Adrenal gland (tissue), 19 donors: ENCODE measurements at regions of chr12 and their contacts with region 1.

Region 1: DNA sequence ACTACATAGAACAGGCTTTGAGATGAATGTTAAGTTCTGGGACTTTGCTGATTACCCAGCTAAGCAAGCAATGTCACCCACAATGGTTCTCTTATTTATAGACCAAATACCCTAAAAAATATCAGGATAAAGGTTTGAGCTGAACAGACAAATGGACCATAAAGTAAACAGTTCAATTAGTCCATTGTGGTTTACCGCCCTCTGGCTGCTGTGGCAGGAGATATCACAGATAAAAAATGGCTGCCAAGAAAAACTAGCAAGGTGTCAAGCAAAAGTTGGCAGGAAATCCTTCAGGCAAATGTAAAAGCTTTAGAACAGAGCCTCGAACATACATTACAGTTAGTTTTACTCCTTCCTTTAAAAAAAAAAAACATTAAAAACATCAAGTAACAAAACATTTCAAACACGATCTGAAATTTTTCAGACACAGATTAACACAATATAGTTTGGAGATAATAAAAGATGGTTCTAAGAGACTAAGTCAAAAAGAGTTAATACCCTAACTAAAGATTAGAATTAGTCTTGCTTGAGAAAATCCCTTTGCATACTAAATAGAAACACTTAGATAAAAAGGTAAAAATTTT is 41.3 kb downstream of the MED13L start:
- DNase-seq: peak; percentile 34 to 76 (median 50)
- H3K4me3 ChIP-seq: no peak overlapping the region
- H3K27ac ChIP-seq: no peak overlapping the region
- H3K4me1 ChIP-seq: peaks cover 0 to 41% of the 10 kb centered on the region in 2 donors
- H3K27me3 ChIP-seq: no peaks in the 10 kb centered on the region
- CTCF ChIP-seq: peak; percentile 56 to 82 (median 76)
- POLR2A ChIP-seq: no peak

Region 2: DNA sequence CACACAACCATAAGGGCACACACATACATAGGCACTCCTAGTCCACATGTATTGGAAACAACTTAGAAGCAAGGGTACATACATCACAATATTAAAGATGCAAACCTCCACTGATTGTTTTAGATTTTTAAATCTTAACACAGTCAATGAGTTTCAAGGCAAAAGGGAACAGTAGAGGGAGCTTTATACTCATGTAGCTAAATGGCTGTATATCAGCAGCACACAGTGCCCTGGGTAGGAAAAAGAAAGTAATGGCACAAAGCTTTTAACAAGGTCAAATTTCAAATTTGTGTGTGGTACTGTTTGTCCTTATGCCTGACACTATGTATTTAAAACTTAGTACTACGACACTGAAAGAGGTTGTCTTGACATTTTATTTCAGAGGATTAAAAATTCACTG is 220.7 kb before region 1 on chr12:
- intact Hi-C with region 1: loop called (anchors 10 kb)
- DNase-seq: peak in 4 of 7 donors; percentile 24 to 45 (median 35)
- H3K4me3 ChIP-seq: no peak overlapping the region
- H3K27ac ChIP-seq: no peak overlapping the region
- H3K4me1 ChIP-seq: peaks cover 0 to 12% of the 10 kb centered on the region in 2 donors
- H3K27me3 ChIP-seq: no peaks in the 10 kb centered on the region
- CTCF ChIP-seq: peak; percentile 39 to 76 (median 64)
- POLR2A ChIP-seq: no peak

Region 3: DNA sequence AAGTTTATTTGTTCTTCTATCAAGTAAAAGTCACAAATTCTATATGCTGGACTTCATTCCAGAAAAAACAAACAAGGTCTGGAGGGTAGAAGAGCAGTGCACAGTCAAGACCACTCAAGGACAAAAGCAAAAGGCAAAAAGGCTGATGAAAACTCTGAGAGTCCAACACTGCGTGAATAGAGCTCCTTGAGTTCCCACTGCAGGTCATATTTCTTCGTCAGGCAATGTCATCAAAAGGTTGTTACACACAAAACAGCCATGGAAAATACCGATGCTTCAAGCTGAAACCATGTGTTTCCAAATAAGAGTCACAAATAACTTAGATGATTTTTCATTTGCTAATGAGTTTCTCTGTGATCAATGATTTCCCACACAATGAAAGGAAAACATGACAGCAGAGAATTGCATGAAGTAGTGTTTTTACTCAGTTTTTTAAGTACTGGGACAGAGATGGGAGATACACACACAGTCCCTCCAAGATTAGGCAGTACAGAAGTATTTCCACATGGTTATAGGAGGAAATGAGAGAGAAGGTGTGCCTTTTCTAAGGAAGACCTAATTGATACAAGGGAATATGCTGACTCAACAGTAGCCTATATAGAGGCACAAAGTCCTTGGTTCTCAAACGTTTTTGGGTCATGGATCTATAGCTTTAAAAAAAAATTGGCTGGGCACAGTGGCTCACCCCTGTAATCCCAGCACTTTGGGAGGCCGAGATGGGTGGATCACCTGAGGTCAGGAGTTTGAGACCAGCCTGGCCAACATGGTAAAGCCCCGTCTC is 136.4 kb before region 1 on chr12:
- intact Hi-C with region 1: no loop called
- DNase-seq: peak in 1 of 7 donors; percentile 12
- H3K4me3 ChIP-seq: no peak overlapping the region
- H3K27ac ChIP-seq: peak overlapping the region in 3 of 5 donors; percentile 11 to 32 (median 24)
- H3K4me1 ChIP-seq: peaks cover 4 to 17% of the 10 kb centered on the region in 2 donors
- H3K27me3 ChIP-seq: no peaks in the 10 kb centered on the region
- CTCF ChIP-seq: no peak
- POLR2A ChIP-seq: no peak

Region 4: GRCh38 chr12:116121453-116121871 is 114.8 kb before region 1 on chr12:
- intact Hi-C with region 1: no loop called
- DNase-seq: no peak
- H3K4me3 ChIP-seq: peak overlapping the region in 2 of 4 donors; percentile 6 to 23
- H3K27ac ChIP-seq: peak overlapping the region in 3 of 5 donors; percentile 26 to 42 (median 38)
- H3K4me1 ChIP-seq: peaks cover 59 to 66% of the 10 kb centered on the region in 2 donors
- H3K27me3 ChIP-seq: no peaks in the 10 kb centered on the region
- CTCF ChIP-seq: no peak
- POLR2A ChIP-seq: no peak

Region 5: GRCh38 chr12:116142936-116143898 is 93.0 kb before region 1 on chr12:
- intact Hi-C with region 1: loop called in 1 of 2 experiments (anchors 10 kb)
- DNase-seq: no peak
- H3K4me3 ChIP-seq: peak overlapping the region in 1 of 4 donors; percentile 13
- H3K27ac ChIP-seq: peak overlapping the region in 2 of 5 donors; percentile 11 to 48
- H3K4me1 ChIP-seq: peaks cover 11 to 58% of the 10 kb centered on the region in 2 donors
- H3K27me3 ChIP-seq: no peaks in the 10 kb centered on the region
- CTCF ChIP-seq: no peak
- POLR2A ChIP-seq: no peak

Region 6: DNA sequence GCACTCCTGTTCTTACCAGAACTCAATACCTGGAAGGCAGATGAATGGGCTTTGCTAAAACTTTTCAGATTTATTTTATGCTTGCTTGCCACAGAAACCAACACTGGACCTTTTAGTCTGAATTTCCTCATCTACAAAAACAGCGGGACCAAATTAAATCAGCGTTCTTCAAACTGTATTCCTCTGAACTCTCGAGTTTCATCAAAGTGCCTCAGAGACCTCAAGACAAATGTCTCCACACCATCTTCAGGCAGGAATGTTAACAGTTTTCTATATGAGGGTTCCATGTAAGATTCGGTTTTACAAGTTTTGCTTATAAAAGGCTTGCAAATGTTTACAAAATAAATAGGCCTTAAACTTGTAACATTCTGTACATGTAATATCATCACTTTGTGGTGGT is 33.3 kb before region 1 on chr12:
- intact Hi-C with region 1: no loop called
- DNase-seq: no peak
- H3K4me3 ChIP-seq: no peak overlapping the region
- H3K27ac ChIP-seq: no peak overlapping the region
- H3K4me1 ChIP-seq: peaks cover 18 to 51% of the 10 kb centered on the region in 2 donors
- H3K27me3 ChIP-seq: no peaks in the 10 kb centered on the region
- CTCF ChIP-seq: no peak
- POLR2A ChIP-seq: no peak

Region 7: GRCh38 chr12:116406516-116406915 is 170.3 kb after region 1 on chr12:
- intact Hi-C with region 1: no loop called
- DNase-seq: peak; percentile 63 to 94 (median 85)
- H3K4me3 ChIP-seq: no peak overlapping the region
- H3K27ac ChIP-seq: peak overlapping the region in 1 of 5 donors; percentile 44
- H3K4me1 ChIP-seq: peaks cover 0 to 9% of the 10 kb centered on the region in 2 donors
- H3K27me3 ChIP-seq: no peaks in the 10 kb centered on the region
- CTCF ChIP-seq: peak in 3 of 6 experiments; percentile 15 to 29 (median 24)
- POLR2A ChIP-seq: peak in 1 of 2 donors; percentile 9